ENCODE measurements at regions of chrX and their contacts with region 1.

Region 1: GRCh38 chrX:68915778-68916177 is 87.0 kb downstream of the EFNB1 start:
- DNase-seq: no peak
- ATAC-seq: no peak
- H3K4me3 ChIP-seq: no peak overlapping the region
- H3K27ac ChIP-seq: no peak overlapping the region
- H3K4me1 ChIP-seq: peaks cover 0 to 12% (median 0%) of the 10 kb centered on the region in 9 donors
- H3K27me3 ChIP-seq: peaks cover 0 to 39% (median 0%) of the 10 kb centered on the region in 7 donors
- CTCF ChIP-seq: no peak

Region 2: GRCh38 chrX:69060631-69061408 is 145.0 kb after region 1 on chrX:
- intact Hi-C with region 1: loop called in 1 of 10 experiments (anchors 10 kb)
- DNase-seq: peak; percentile 22 to 60
- ATAC-seq: peak; percentile 79 to 89 (median 82)
- H3K4me3 ChIP-seq: no peak overlapping the region
- H3K27ac ChIP-seq: no peak overlapping the region
- H3K4me1 ChIP-seq: peaks cover 0 to 6% (median 0%) of the 10 kb centered on the region in 9 donors
- H3K27me3 ChIP-seq: peaks cover 0 to 8% (median 0%) of the 10 kb centered on the region in 7 donors
- CTCF ChIP-seq: peak in 8 of 9 donors; percentile 18 to 67 (median 56)